IMR-90 (cell line): ENCODE measurements at regions of chrX and their contacts with region 1.

Region 1: GRCh38 chrX:24259544-24260240 is 54.2 kb downstream of the SUPT20HL2 start:
- DNase-seq: peak; percentile 80
- ATAC-seq: peak; percentile 94
- H3K4me3 ChIP-seq: no peak overlapping the region
- H3K27ac ChIP-seq: no peak overlapping the region
- H3K4me1 ChIP-seq: no peaks in the 10 kb centered on the region; the same call in 1 of the 2 replicates
- H3K27me3 ChIP-seq: peaks cover 7% of the 10 kb centered on the region
- CTCF ChIP-seq: peak; percentile 73
- POLR2A ChIP-seq: no peak
- RAD21 ChIP-seq: peak; percentile 79

Region 2: GRCh38 chrX:24498975-24499374 is 239.3 kb after region 1 on chrX:
- CTCF ChIA-PET with region 1: interaction called, 10 read pairs
- POLR2A ChIA-PET with region 1: no interaction called
- dilution Hi-C with region 1: no loop called
- in situ Hi-C with region 1: loop called (anchors 10 kb)
- intact Hi-C with region 1: loop called (anchors 1 kb)
- DNase-seq: peak; percentile 11
- ATAC-seq: peak; percentile 35; the same call in 1 of the 2 replicates
- H3K4me3 ChIP-seq: no peak overlapping the region
- H3K27ac ChIP-seq: no peak overlapping the region
- H3K4me1 ChIP-seq: no peaks in the 10 kb centered on the region
- H3K27me3 ChIP-seq: no peaks in the 10 kb centered on the region; the same call in 1 of the 2 replicates
- CTCF ChIP-seq: peak; percentile 50
- POLR2A ChIP-seq: no peak
- RAD21 ChIP-seq: peak; percentile 38

Region 3: GRCh38 chrX:24506055-24506454 is 246.4 kb after region 1 on chrX:
- CTCF ChIA-PET with region 1: no interaction called
- POLR2A ChIA-PET with region 1: no interaction called
- dilution Hi-C with region 1: no loop called
- in situ Hi-C with region 1: loop called (anchors 10 kb)
- intact Hi-C with region 1: no loop called
- DNase-seq: peak; percentile 44
- ATAC-seq: peak; percentile 53
- H3K4me3 ChIP-seq: no peak overlapping the region
- H3K27ac ChIP-seq: no peak overlapping the region
- H3K4me1 ChIP-seq: peaks cover 1% of the 10 kb centered on the region; the same call in 1 of the 2 replicates
- H3K27me3 ChIP-seq: no peaks in the 10 kb centered on the region
- CTCF ChIP-seq: no peak
- POLR2A ChIP-seq: no peak
- RAD21 ChIP-seq: no peak

Region 4: DNA sequence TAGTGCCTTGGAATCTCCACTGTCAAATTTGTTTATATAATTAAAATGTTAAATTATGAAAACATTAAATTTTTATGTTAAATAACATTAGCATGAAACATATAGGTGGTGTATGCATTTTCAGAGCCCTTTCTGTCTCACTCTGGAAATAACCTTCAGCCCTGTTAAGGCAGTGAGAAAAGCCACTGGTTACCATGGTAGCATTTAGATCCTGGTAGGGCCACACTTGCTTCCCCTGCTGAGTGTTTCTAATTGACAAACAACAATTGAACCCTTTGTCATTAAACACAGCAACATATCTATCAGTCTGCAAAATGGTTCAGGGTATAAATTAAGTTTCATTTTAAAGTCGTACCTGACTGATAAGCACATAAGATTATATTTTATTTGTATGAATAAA is 268.9 kb after region 1 on chrX:
- CTCF ChIA-PET with region 1: no interaction called
- POLR2A ChIA-PET with region 1: no interaction called
- dilution Hi-C with region 1: no loop called
- in situ Hi-C with region 1: no loop called
- intact Hi-C with region 1: no loop called
- DNase-seq: no peak
- ATAC-seq: no peak
- H3K4me3 ChIP-seq: no peak overlapping the region
- H3K27ac ChIP-seq: no peak overlapping the region
- H3K4me1 ChIP-seq: no peaks in the 10 kb centered on the region
- H3K27me3 ChIP-seq: no peaks in the 10 kb centered on the region; the same call in 1 of the 2 replicates
- CTCF ChIP-seq: no peak
- POLR2A ChIP-seq: no peak
- RAD21 ChIP-seq: no peak